ENCODE measurements at regions of chr6 and their contacts with region 1.

Region 1: DNA sequence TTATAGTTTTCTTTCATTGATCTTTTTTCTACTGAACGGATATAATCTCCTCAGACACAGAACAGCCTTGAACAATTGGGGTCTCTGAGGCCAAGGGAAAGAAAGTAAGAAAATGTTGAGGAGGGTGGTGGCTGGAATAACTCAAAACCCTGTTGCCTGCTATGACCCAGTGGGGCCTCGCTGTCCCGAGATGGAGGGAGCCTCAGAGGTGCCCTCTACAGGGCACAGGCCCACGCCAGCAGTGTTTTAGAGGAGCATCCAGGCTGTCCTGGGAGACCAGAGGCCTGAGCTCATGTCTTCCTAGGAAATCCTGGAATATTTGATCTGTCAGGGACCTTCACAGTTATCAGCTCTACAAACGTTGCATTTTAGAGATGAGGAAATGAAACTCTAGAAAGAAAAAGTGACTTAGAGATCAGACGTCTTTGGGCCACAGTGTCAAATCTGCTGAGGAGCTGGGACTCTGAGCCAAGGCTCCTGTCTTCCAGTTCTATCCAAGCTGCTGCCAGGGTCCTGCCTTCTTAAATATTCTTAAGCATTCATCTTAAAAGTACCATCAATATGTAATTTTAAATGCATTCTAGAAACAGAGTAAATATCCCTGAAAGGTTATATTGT is 26.3 kb downstream of the ALDH5A1 start:
- DNase-seq: peak; percentile 46
- ATAC-seq: peak; percentile 73
- H3K4me3 Mint-ChIP-seq: no peak overlapping the region
- H3K27ac Mint-ChIP-seq: no peak overlapping the region
- H3K4me1 Mint-ChIP-seq: peaks cover 12% of the 10 kb centered on the region
- H3K27me3 Mint-ChIP-seq: no peaks in the 10 kb centered on the region

Region 2: GRCh38 chr6:24494821-24495795 is 25.9 kb before region 1 on chr6 and contains the start of gene ALDH5A1:
- CTCF ChIA-PET with region 1: interaction called, 16 read pairs
- POLR2A ChIA-PET with region 1: no interaction called
- DNase-seq: peak; percentile 80
- ATAC-seq: peak; percentile 87
- H3K4me3 Mint-ChIP-seq: peak within 1 kb of the TSS; percentile 74
- H3K27ac Mint-ChIP-seq: peak within 1 kb of the TSS; percentile 25
- H3K4me1 Mint-ChIP-seq: peaks cover 14% of the 10 kb centered on the region
- H3K27me3 Mint-ChIP-seq: no peaks in the 10 kb centered on the region
- total RNA-seq, gene ALDH5A1: 4.8 to 4.9 TPM

Region 3: GRCh38 chr6:24831771-24832716 is 311.0 kb after region 1 on chr6:
- CTCF ChIA-PET with region 1: no interaction called
- POLR2A ChIA-PET with region 1: no interaction called
- DNase-seq: no peak
- ATAC-seq: no peak
- H3K4me3 Mint-ChIP-seq: no peak overlapping the region
- H3K27ac Mint-ChIP-seq: peak overlapping the region; percentile 9
- H3K4me1 Mint-ChIP-seq: peaks cover 28% of the 10 kb centered on the region
- H3K27me3 Mint-ChIP-seq: no peaks in the 10 kb centered on the region